PC-9 (cell line): ENCODE measurements at regions of chr18 and their contacts with region 1.

Region 1: DNA sequence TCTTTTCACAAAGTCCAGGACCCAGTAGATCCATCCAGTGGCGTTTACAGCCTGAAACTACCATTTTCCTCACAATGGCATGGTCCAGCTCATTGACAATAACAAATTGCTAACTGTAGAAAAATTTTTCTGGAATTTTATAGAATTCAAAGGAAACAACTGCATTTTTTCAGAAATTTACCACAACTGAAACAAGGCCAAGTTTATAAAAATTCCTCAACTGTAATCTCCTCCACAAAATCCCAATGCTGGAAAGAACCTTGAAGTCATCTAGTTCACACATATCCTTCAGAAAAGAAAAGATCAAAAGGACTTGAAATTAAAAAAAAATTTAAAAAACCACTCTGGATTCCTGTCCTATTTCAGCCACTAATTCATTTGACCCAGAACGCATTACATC is 226.0 kb upstream of the CTAGE1 start:
- DNase-seq: no peak
- H3K4me3 ChIP-seq: no peak overlapping the region
- H3K27ac ChIP-seq: no peak overlapping the region
- H3K4me1 ChIP-seq: peaks cover 7% of the 10 kb centered on the region; the same call in 1 of the 2 replicates
- H3K27me3 ChIP-seq: no peaks in the 10 kb centered on the region
- CTCF ChIP-seq: no peak

Region 2: GRCh38 chr18:22032392-22032961 is 611.3 kb before region 1 on chr18:
- CTCF ChIA-PET with region 1: no interaction called
- POLR2A ChIA-PET with region 1: interaction called, 12 read pairs
- intact Hi-C with region 1: no loop called
- DNase-seq: peak; percentile 45 to 95
- H3K4me3 ChIP-seq: no peak overlapping the region
- H3K27ac ChIP-seq: peak overlapping the region; percentile 86
- H3K4me1 ChIP-seq: peaks cover 16% of the 10 kb centered on the region
- H3K27me3 ChIP-seq: no peaks in the 10 kb centered on the region
- CTCF ChIP-seq: no peak

Region 3: GRCh38 chr18:22789600-22789999 is 145.9 kb after region 1 on chr18:
- CTCF ChIA-PET with region 1: no interaction called
- POLR2A ChIA-PET with region 1: no interaction called
- intact Hi-C with region 1: no loop called
- DNase-seq: no peak
- H3K4me3 ChIP-seq: no peak overlapping the region
- H3K27ac ChIP-seq: no peak overlapping the region
- H3K4me1 ChIP-seq: no peaks in the 10 kb centered on the region
- H3K27me3 ChIP-seq: no peaks in the 10 kb centered on the region
- CTCF ChIP-seq: no peak